ENCODE measurements at regions of chr18 and their contacts with region 1.

Region 1: DNA sequence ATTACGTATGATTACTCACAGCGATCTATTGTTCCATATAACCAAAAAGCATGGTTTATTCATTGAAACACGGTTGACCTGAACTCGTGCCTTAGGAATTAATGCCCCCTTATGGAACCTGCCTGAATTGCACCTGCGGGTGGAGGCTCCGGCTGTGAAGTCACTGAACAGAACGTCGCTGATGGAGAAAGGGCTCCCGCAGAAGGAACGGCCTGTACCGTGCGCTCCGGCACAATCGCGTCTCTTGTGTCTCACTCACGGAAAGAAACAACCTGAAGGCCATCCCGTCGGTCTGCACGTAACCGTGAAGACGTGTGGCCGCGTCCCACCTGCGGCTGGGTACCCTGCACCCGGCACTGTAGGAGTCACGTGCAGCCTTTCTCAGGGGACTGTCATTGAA is 133.1 kb downstream of the NFATC1 start:
- DNase-seq: peak; percentile 59 to 75
- H3K4me3 ChIP-seq: no peak overlapping the region
- H3K27ac ChIP-seq: no peak overlapping the region
- H3K4me1 ChIP-seq: peaks cover 0 to 16% (median 15%) of the 10 kb centered on the region in 4 donors
- H3K27me3 ChIP-seq: peaks cover 0 to 2% of the 10 kb centered on the region in 2 donors
- CTCF ChIP-seq: peak; percentile 90 to 93

Region 2: GRCh38 chr18:79570266-79571201 is 41.7 kb after region 1 on chr18:
- intact Hi-C with region 1: no loop called
- DNase-seq: peak in 1 of 2 donors; percentile 34
- H3K4me3 ChIP-seq: no peak overlapping the region
- H3K27ac ChIP-seq: no peak overlapping the region
- H3K4me1 ChIP-seq: peaks cover 0 to 18% (median 12%) of the 10 kb centered on the region in 4 donors
- H3K27me3 ChIP-seq: no peaks in the 10 kb centered on the region
- CTCF ChIP-seq: no peak

Region 3: GRCh38 chr18:79643054-79643984 is 114.5 kb after region 1 on chr18:
- intact Hi-C with region 1: loop called (anchors 2 kb)
- DNase-seq: no peak
- H3K4me3 ChIP-seq: no peak overlapping the region
- H3K27ac ChIP-seq: no peak overlapping the region
- H3K4me1 ChIP-seq: peaks cover 0 to 19% (median 14%) of the 10 kb centered on the region in 4 donors
- H3K27me3 ChIP-seq: peaks cover 0 to 6% of the 10 kb centered on the region in 2 donors
- CTCF ChIP-seq: no peak